Naive thymus-derived CD4-positive, alpha-beta T cell (primary cell): ENCODE measurements at regions of chr20 and their contacts with region 1.

Region 1: GRCh38 chr20:25247956-25248785 is at the start of gene PYGB:
- DNase-seq: peak; percentile 52 to 84 (median 68)
- ATAC-seq: peak; percentile 95
- H3K4me3 ChIP-seq: peak within 1 kb of the TSS; percentile 93
- H3K4me3 Mint-ChIP-seq: peak within 1 kb of the TSS; percentile 85 to 99 (median 94)
- H3K27ac ChIP-seq: peak within 1 kb of the TSS; percentile 75
- H3K27ac Mint-ChIP-seq: peak within 1 kb of the TSS; percentile 79 to 97 (median 87)
- H3K4me1 ChIP-seq: peaks cover 5 to 7% of the 10 kb centered on the region in 2 donors
- H3K4me1 Mint-ChIP-seq: peaks cover 19 to 60% (median 49%) of the 10 kb centered on the region in 7 donors
- H3K27me3 ChIP-seq: no peaks in the 10 kb centered on the region
- H3K27me3 Mint-ChIP-seq: peaks cover 0 to 13% (median 0%) of the 10 kb centered on the region in 5 donors
- total RNA-seq, gene PYGB: 29.8 to 45.2 (median 43.6) TPM

Region 2: DNA sequence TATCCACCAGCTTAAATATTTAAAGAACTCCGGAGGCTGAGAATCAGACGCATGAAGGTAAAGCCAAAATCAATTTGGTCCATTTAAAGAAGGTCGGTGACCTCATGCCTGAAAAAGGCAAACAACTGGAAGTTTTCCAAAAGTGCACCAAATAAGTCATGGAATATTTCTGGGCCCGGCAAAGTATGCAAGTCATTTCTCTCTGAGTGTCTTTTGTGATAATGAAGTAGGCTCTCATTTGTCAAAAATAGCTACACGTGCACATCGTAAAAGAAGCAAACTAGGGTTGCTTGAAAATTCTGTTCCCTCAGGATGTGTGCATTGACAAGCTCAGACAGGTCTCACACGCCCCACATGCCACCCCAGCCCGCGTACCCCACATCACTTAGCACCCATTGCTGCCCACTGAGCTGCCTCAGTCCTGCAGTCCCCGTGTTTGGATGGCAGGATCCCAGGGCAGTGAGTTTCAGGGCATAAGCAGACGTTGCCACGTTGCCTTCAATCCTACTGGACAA is 20.8 kb before region 1 on chr20:
- CTCF ChIA-PET with region 1: no interaction called
- POLR2A ChIA-PET with region 1: no interaction called
- intact Hi-C with region 1: no loop called
- DNase-seq: no peak
- ATAC-seq: no peak
- H3K4me3 ChIP-seq: no peak overlapping the region
- H3K4me3 Mint-ChIP-seq: no peak overlapping the region
- H3K27ac ChIP-seq: no peak overlapping the region
- H3K27ac Mint-ChIP-seq: no peak overlapping the region
- H3K4me1 ChIP-seq: no peaks in the 10 kb centered on the region
- H3K4me1 Mint-ChIP-seq: peaks cover 0 to 3% (median 0%) of the 10 kb centered on the region in 7 donors
- H3K27me3 ChIP-seq: no peaks in the 10 kb centered on the region
- H3K27me3 Mint-ChIP-seq: no peaks in the 10 kb centered on the region

Region 3: GRCh38 chr20:25237610-25238318 is 10.4 kb before region 1 on chr20:
- CTCF ChIA-PET with region 1: no interaction called
- POLR2A ChIA-PET with region 1: no interaction called
- intact Hi-C with region 1: loop called in 1 of 2 experiments (anchors 1 kb)
- DNase-seq: peak in 1 of 9 donors; percentile 62
- ATAC-seq: peak; percentile 86
- H3K4me3 ChIP-seq: no peak overlapping the region
- H3K4me3 Mint-ChIP-seq: peak overlapping the region in 1 of 10 donors; percentile 19
- H3K27ac ChIP-seq: no peak overlapping the region
- H3K27ac Mint-ChIP-seq: peak overlapping the region in 2 of 9 donors; percentile 7 to 67
- H3K4me1 ChIP-seq: no peaks in the 10 kb centered on the region
- H3K4me1 Mint-ChIP-seq: peaks cover 0 to 19% (median 0%) of the 10 kb centered on the region in 7 donors
- H3K27me3 ChIP-seq: no peaks in the 10 kb centered on the region
- H3K27me3 Mint-ChIP-seq: peaks cover 7 to 25% (median 20%) of the 10 kb centered on the region in 5 donors

Region 4: DNA sequence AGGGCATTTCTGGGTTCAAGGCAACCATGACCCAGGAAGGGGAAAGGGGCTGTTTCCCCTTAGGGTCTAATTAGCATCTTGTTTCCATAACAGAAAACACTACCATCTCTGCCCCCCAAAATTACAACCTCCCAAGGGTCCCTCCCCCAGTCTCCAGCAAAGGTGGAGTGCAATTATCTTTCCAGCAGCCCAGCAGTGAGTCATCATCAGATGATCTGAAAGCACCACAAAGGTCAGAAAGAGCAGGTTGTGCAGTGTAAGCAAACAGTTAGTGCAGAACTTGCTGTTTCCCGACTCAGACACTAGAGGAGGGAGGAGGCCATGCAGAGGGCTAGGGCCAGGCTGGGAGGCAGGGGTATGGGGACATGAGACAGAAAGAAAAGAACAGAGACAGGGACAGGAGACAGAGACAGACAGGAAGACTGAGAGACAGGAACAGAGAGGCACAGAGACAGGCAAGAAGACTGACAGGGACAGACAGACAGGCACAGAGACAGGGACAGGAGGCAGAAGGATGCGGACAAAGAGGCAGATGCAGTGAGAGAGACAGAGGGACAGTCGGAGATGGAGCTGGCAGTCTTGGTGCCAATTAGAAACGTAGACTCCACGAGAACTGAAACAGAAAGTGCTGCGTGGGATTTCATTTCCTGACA is 62.2 kb after region 1 on chr20:
- CTCF ChIA-PET with region 1: no interaction called
- POLR2A ChIA-PET with region 1: no interaction called
- intact Hi-C with region 1: loop called in 1 of 2 experiments (anchors 5 kb)
- DNase-seq: peak in 4 of 9 donors; percentile 12 to 64 (median 18)
- ATAC-seq: peak; percentile 87
- H3K4me3 ChIP-seq: peak overlapping the region; percentile 18
- H3K4me3 Mint-ChIP-seq: peak overlapping the region; percentile 8 to 88 (median 76)
- H3K27ac ChIP-seq: peak overlapping the region; percentile 31
- H3K27ac Mint-ChIP-seq: peak overlapping the region; percentile 68 to 97 (median 85)
- H3K4me1 ChIP-seq: peaks cover 3 to 8% of the 10 kb centered on the region in 2 donors
- H3K4me1 Mint-ChIP-seq: peaks cover 15 to 38% (median 20%) of the 10 kb centered on the region in 7 donors
- H3K27me3 ChIP-seq: no peaks in the 10 kb centered on the region
- H3K27me3 Mint-ChIP-seq: no peaks in the 10 kb centered on the region

Region 5: DNA sequence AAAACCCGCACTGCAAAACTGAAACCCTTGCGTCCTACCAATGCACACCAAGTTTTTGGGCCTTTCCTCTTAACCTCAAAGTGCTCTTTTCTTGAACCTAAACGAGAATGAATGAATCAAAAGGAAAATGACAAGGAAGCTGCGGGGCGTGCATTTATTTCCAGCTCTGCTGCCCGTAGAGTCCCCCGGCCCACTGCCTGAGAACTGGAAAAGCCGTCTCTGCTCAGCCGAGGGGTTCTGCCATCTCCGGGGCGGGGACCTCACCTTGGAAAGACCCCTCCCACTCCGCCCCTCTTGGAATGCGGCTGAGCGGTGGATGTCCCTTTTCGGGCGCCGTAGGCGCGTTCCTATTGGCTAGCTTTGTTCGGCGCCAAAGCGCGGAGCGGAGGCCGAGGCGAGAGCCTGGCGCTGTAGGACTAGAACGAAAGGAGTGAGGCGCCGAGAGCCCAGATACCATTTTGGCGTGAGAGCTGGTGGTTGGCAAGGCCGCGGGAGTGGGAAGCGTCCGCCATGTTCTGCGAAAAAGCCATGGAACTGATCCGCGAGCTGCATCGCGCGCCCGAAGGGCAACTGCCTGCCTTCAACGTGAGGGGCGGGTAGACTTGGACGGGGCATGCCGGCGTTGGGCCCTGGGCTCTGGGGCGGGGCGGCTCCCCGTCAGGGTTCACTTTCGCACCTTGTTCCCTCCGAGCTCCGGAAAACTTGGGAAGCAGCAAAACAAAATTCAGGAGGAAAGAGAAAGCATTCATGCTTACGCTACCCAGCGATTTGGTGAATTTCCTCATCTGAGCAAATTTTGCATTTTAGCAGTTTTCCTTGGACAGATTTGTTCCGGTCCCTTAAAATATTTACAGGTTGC is 159.4 kb after region 1 on chr20 and contains the start of gene GINS1:
- CTCF ChIA-PET with region 1: no interaction called
- POLR2A ChIA-PET with region 1: no interaction called
- intact Hi-C with region 1: loop called (anchors 5 kb)
- DNase-seq: peak; percentile 56 to 92 (median 69)
- ATAC-seq: peak; percentile 94
- H3K4me3 ChIP-seq: peak within 1 kb of the TSS; percentile 75
- H3K4me3 Mint-ChIP-seq: peak within 1 kb of the TSS; percentile 77 to 95 (median 92)
- H3K27ac ChIP-seq: peak within 1 kb of the TSS; percentile 57
- H3K27ac Mint-ChIP-seq: peak within 1 kb of the TSS; percentile 28 to 93 (median 80)
- H3K4me1 ChIP-seq: peaks cover 6 to 11% of the 10 kb centered on the region in 2 donors
- H3K4me1 Mint-ChIP-seq: peaks cover 4 to 25% (median 13%) of the 10 kb centered on the region in 7 donors
- H3K27me3 ChIP-seq: no peaks in the 10 kb centered on the region
- H3K27me3 Mint-ChIP-seq: no peaks in the 10 kb centered on the region
- total RNA-seq, gene GINS1: 0.44 to 24.9 (median 0.81) TPM

Region 6: GRCh38 chr20:26276554-26277210 is 1028.5 kb after region 1 on chr20:
- CTCF ChIA-PET with region 1: no interaction called
- POLR2A ChIA-PET with region 1: no interaction called
- intact Hi-C with region 1: loop called in 1 of 2 experiments (anchors 10 kb)
- DNase-seq: no peak
- ATAC-seq: no peak
- H3K4me3 ChIP-seq: no peak overlapping the region
- H3K4me3 Mint-ChIP-seq: peak overlapping the region in 2 of 10 donors; percentile 11 to 36
- H3K27ac ChIP-seq: no peak overlapping the region
- H3K27ac Mint-ChIP-seq: peak overlapping the region in 2 of 9 donors; percentile 0 to 76
- H3K4me1 ChIP-seq: peaks cover 0 to 24% of the 10 kb centered on the region in 2 donors
- H3K4me1 Mint-ChIP-seq: peaks cover 9 to 48% (median 39%) of the 10 kb centered on the region in 7 donors
- H3K27me3 ChIP-seq: no peaks in the 10 kb centered on the region
- H3K27me3 Mint-ChIP-seq: no peaks in the 10 kb centered on the region